ENCODE measurements at regions of chr10 and their contacts with region 1.

Region 1: GRCh38 chr10:31318854-31319601 is at the start of gene ZEB1:
- DNase-seq: peak; percentile 93
- total RNA-seq, gene ZEB1: 149 TPM

Region 2: GRCh38 chr10:31031558-31032257 is 287.3 kb before region 1 on chr10 and contains the start of gene ZNF438:
- intact Hi-C with region 1: loop called (anchors 2 kb)
- DNase-seq: peak; percentile 99
- total RNA-seq, gene ZNF438: 12.5 TPM

Region 3: GRCh38 chr10:31146491-31147209 is 172.4 kb before region 1 on chr10:
- intact Hi-C with region 1: no loop called
- DNase-seq: peak; percentile 86

Region 4: DNA sequence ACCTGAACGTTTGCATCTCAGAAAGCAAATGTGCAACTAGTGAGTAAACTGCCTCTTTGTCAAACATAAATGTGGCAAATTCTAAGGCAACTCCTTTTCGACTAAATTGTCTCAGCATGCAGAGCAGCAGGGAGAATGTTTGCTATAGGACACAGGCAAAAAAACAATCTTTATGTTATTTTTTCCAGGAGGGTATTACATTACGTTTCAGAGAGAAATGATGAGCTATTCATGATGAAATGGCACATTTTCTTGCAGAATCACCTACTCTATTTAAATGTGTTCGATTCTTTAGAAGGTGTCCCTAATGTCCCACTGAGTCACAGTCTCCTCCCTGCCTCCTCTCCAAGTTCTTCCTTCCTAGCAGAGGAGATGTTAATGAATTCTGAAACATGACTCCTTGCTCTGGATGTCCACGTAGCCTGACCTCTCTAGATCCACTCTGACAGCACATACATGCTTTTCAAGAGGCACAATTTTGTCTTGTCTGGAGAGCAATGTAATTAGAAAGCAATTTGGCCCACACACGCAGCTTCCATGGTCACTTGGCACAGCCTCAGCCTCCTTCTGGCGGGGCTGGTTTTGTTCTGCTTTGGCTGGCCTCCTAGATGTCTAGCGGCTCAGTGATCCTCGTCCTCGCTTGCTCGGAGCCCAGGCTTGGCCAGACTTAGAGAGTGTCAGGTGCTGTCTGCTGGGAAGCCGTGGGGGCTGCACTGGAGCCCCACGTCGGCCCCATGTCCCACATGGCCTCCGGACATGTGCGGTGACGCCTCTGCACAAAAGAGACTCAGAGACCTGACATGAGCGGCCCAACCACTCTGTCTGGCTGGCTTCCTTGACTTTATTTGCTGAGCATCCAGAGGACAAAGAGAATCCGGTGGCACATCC is 161.7 kb before region 1 on chr10:
- intact Hi-C with region 1: loop called (anchors 5 kb)
- DNase-seq: peak; percentile 89

Region 5: DNA sequence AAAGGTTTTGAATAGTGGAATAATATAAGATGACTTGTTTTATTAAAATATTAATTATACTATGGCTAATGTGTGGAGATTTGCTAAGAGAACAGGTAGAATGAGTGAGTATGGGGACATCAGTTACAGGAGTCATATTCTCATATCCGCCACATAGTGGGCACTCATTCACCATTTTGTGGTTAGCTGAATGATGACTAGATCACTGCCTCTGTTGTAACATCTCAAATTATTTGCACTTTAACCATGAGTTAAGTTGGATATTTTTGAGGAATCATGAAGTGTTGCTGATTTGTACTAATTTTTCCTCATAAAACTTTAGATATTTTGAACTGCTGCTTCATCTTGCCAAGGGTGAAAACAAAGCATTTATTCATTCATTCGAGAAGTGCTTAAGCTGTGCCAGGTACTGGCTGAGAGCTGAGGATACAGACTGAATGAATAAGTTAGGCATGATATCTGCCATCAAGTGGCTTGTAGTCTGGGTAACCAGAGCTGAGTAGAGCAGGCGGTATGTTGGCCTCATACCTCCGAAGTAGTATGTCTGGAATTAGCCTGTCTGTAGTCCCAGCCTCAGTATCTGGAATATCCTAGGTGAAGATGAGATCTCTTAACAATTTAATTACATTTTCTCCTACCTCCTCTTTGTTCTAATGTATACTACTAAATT is 100.5 kb after region 1 on chr10:
- intact Hi-C with region 1: no loop called
- DNase-seq: no peak

Region 6: DNA sequence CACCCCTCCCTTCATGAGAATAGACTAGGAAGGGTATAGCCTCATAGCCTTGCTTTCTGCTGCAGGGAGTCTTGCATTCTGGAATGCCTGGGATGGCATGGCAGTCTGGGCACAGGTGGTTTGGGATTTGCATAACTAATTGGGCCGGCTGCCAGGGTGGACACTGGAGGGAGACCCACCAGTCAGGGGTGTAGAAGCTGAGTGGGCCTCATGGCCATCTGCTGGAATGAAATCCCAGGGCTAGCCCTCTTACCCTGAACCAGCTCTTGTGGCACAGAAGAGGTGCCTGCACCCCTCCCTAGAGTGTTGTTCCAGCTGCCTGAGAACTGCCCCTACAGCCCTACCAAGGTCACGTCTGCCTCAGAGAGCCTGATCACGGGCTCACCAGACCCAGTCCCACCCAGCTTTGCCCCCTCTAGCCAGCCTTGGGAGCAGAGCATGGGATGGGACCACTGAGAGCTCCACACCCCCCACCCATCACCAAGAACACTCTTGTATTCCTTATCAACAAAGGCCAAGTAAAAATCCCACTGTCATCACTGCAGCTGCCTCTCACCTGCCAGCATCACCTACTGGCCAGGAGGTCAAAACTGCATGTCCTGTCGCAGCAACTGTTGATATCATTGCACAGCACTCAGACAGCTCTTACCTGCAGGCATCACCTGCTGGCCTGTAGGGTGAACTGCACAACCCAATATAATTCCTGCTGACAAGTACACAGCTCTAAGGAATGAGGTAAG is 148.9 kb after region 1 on chr10:
- intact Hi-C with region 1: loop called (anchors 10 kb)
- DNase-seq: no peak

Region 7: GRCh38 chr10:31603235-31604087 is 284.4 kb after region 1 on chr10:
- intact Hi-C with region 1: loop called (anchors 2 kb)
- DNase-seq: peak; percentile 98

Region 8: DNA sequence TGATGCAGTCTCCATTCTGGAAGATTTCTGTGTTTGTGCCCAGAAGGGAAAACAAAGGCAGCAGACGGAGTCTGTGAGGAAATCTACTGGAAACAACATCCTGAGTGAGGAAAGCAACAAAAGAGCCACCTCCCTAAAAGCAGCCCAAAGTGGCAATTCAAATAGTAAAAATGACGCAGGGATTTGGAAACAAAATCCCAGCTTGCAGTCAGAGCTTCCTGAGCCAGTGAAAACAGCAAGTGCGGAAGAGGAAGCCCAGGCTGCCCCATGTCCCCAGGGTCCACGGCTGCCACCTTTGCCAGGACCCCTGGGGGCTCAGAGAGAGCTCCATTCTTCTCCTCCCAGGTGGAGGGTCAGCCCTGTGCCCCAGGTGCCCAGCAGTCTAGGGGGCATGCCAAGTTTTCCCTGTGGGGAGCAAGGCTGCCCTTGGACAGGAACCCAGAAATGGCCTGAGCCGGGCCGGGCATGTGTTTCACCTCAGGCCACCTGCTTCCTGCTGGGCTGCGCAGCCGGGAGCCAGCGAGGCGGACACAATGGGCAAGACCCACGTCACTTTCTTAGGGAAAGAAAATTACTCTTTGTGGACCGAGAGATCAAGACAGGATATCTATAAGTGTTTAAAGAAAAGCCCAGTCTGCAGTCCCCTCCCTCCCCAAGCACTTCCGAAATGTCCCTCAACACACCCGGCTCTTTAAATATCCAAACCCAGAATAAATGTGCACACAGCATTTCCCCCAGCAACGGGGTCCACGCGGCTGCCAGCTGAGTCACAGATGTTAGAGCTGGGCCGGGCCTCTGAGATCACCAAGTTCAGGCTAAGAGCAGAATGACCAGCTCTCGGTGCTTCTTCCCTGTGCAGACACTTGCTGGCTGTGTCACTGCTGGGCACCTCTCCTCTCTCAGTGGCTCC is 378.5 kb after region 1 on chr10:
- intact Hi-C with region 1: loop called (anchors 10 kb)
- DNase-seq: peak; percentile 91

Measured in cardiac septum (tissue), 1 donor.